Activated CD4-positive, alpha-beta memory T cell treated with anti-CD3 and anti-CD28 coated beads, Interleukin-2, amount 10 ng/mL, durations not matched to agents 7 days and 5 days (primary cell): ENCODE measurements at regions of chr12 and their contacts with region 1.

Region 1: DNA sequence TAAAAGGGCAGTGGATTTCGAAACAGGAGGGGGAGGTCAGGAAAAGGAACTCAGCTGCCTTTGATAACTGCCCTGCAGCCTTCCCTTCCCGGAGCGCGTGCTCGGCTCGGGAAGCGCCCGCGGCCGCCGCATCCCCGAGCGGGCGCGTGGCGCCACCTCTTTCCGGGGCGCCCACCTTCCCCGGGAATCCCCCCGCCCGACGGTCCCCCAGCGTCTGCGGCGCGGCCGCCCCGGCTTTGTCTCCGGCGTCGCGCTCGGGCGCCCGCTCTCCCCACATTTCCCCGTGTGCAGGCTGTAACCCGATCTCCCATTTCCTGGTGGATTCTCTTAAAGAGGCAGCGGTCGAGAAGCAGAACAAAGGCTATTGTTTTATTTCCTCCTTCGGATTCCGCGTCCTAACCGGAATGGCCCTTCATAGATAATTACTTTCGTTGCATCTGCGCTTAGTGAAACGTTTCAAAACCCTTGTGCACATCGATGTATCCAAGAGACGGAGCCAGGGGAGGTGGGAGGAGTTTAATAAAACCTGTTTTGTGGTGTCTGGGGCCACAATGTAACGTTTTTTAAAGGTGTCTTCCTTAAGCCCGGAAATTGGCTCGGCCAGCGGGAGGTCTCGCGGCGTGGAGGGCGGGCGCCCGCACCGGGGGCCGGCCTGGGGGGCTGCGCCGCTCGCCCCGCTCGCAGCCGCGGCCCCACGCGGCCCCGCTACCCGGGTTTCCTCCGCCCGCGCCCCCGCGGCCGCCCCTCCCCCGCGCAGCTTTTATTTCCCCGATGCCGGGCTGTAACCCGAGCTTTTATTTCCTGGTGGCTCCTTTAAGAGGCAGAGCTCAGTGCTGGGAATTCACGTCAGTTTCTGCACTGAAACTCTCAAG is at the start of gene ETV6:
- DNase-seq: peak; percentile 77
- H3K4me3 Mint-ChIP-seq: peak within 1 kb of the TSS; percentile 95
- H3K27ac Mint-ChIP-seq: peak within 1 kb of the TSS; percentile 96
- H3K4me1 Mint-ChIP-seq: peaks cover 28% of the 10 kb centered on the region
- H3K27me3 Mint-ChIP-seq: no peaks in the 10 kb centered on the region
- total RNA-seq, gene ETV6: 53.7 to 54.9 TPM

Region 2: DNA sequence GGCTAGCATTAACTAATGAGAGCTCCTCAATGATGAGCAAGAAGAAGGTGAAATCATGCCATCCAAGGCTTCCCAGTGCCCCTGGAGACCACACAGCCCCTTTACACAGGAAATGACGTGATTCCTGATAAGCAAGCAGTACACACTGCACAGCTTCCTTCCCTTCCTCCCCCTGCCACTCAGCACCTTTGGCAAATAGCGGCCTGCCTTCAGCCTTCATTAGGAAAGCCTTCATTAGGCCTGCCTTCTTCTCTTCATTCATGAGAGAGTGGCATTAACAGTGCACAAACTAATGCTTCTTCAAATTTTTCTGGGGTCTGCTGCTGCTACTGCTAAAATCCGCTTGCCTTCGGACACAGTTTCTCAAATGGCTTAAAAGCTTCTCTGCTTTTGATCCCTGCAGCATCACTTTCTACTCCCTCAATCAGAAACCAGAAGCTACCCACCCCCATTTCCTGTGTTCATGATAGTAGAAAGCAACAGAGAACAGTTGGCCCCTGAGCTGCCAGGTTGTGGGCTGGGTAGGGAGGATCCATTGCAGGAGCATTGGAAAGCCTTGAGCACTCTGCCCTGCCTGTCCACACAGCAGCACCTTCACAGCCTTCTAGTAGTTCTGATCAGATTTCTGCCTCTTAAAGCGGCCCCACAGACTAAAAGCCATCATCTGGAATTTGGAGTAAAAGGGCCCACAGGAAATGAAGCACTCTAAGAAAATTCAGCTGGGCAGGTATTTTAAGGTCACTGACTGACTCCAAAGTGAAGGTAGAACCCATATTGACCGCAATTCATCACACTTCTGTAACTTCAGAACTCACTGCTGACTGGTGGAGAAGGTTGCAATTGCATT is 103.4 kb before region 1 on chr12:
- CTCF ChIA-PET with region 1: no interaction called
- POLR2A ChIA-PET with region 1: interaction called, 16 read pairs
- DNase-seq: peak; percentile 59
- H3K4me3 Mint-ChIP-seq: peak overlapping the region; percentile 9
- H3K27ac Mint-ChIP-seq: peak overlapping the region; percentile 90
- H3K4me1 Mint-ChIP-seq: peaks cover 36% of the 10 kb centered on the region
- H3K27me3 Mint-ChIP-seq: peaks cover 3% of the 10 kb centered on the region

Region 3: GRCh38 chr12:11672256-11673191 is 23.5 kb after region 1 on chr12:
- CTCF ChIA-PET with region 1: no interaction called
- POLR2A ChIA-PET with region 1: no interaction called
- DNase-seq: no peak
- H3K4me3 Mint-ChIP-seq: no peak overlapping the region
- H3K27ac Mint-ChIP-seq: no peak overlapping the region
- H3K4me1 Mint-ChIP-seq: peaks cover 17% of the 10 kb centered on the region
- H3K27me3 Mint-ChIP-seq: no peaks in the 10 kb centered on the region

Region 4: DNA sequence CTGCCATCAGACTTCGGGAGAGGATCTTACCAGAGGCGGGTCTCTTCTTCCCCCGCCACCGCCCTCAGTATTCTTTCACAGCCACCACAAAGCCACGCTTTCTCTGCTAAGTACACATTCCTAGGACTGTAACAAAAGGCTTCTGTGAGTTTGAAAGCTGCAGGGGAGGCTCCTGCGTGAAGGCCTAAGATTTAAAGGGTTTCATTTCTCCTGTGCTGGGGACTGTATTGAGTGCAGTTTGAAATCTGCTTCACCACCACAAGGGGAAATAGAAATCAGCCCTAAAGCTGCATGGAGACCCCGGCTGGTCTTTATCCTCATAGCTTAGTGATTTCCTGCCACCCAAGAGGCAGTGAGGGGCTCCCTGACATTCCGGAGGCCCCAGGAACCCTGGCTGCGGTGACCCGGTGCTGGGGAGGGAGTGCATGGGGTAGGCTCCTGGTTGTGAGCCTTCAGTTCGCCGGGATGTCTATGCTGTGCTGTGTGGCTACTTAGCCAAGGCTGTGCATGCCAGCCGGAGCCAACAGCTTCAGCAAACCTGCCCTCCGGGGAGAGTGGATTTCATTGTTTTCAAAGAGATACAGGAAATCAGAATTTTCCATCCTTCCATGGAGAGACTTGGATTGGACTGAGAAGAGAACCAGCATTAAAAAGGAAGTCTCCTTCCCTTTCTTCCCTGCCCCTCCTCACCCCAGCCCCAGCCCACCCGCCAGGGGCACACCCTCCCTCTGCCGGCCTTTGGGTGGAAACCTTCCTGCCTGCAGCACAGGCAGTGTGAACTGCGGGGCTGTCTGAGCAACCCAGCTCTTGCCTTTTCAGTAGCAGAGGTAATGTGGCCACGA is 163.7 kb after region 1 on chr12:
- CTCF ChIA-PET with region 1: no interaction called
- POLR2A ChIA-PET with region 1: interaction called, 11 read pairs
- DNase-seq: peak; percentile 22
- H3K4me3 Mint-ChIP-seq: no peak overlapping the region
- H3K27ac Mint-ChIP-seq: peak overlapping the region; percentile 52
- H3K4me1 Mint-ChIP-seq: peaks cover 48% of the 10 kb centered on the region
- H3K27me3 Mint-ChIP-seq: no peaks in the 10 kb centered on the region

Region 5: DNA sequence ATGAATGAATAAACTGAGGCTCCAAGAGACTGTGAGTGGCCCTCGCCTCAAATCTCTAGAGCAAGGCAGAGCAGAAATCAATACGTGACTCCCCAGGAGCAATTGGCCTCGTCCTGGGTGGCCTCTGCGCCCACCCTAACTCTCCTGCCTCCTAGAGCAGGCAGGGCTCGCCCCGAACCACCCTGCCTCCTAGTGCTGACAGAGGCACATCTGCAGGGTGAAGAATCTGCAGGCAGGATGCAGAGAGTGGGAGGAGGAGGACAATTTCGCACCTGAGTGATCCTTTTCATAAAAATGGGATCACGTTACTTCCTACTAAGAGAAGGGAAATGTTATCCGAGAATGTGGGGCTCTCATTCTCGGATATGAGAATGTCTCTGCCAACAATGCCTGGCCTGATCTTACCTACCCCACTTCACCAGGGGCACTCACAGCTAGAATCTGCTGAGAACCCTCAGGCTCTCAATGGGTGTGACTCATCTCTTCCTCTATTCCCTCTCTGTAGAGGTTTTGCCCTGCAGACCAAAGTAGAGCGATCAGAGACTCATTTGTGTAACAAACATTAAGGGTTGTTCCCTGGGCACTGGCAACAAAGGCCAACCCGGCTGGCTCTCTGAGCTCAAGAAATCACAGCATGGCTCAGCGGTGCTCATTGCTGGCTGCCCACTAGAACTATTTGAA is 360.0 kb after region 1 on chr12:
- CTCF ChIA-PET with region 1: interaction called, 16 read pairs
- POLR2A ChIA-PET with region 1: interaction called, 64 read pairs
- DNase-seq: peak; percentile 69
- H3K4me3 Mint-ChIP-seq: peak overlapping the region; percentile 64
- H3K27ac Mint-ChIP-seq: peak overlapping the region; percentile 89
- H3K4me1 Mint-ChIP-seq: peaks cover 77% of the 10 kb centered on the region
- H3K27me3 Mint-ChIP-seq: peaks cover 18% of the 10 kb centered on the region

Region 6: DNA sequence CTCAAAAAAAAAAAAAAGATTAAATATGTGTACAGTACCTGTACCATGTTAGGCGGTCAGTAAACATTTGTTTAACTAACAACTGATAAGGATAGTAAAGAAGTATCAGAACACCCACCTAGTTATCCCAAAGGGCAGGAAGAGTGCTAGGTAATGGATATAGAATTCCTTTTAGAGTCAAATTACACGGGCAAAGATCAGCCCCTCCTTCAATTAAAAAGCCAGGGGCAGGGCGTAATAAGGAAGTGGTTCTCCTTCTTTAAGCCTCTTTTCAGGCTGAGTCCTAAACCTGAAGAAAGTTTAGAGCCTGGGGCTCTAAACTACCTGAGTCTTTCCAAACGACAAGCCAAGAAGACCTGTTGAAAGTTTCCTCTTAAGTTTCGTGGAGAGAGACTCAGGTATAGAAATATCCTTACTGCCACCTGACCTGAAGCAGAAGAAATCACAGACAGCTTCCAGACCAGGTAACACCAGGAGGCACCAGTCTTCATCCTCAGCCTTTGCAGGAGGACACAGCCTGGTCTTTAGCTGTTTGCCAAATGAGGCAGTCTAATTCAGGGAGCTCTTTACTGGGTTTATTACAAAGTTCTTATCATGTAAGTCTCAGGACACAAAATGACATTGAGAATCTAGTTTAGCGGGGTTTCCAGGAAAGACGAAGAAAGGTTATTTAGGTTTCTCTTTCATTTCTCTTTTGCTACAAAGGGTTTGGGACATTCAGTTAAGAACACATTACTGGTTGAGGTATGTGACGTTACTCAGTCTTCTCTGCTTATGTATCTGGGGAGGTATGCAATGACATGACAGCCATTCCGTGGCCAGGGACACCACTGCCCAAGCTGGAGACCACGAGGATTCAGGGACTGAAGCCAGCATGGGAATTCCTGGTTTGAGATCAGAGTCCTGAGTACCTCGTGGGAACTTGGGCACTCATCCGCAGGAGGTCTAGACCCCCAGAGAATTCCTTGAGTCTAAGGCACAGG is 421.9 kb after region 1 on chr12 and contains the start of gene BCL2L14:
- CTCF ChIA-PET with region 1: no interaction called
- POLR2A ChIA-PET with region 1: interaction called, 11 read pairs
- DNase-seq: peak; percentile 38
- H3K4me3 Mint-ChIP-seq: peak within 1 kb of the TSS; percentile 83
- H3K27ac Mint-ChIP-seq: peak within 1 kb of the TSS; percentile 89
- H3K4me1 Mint-ChIP-seq: peaks cover 29% of the 10 kb centered on the region
- H3K27me3 Mint-ChIP-seq: peaks cover 2% of the 10 kb centered on the region
- total RNA-seq, gene BCL2L14: 13.0 to 13.9 TPM